ENCODE measurements at regions of chr9 and their contacts with region 1.

Region 1: DNA sequence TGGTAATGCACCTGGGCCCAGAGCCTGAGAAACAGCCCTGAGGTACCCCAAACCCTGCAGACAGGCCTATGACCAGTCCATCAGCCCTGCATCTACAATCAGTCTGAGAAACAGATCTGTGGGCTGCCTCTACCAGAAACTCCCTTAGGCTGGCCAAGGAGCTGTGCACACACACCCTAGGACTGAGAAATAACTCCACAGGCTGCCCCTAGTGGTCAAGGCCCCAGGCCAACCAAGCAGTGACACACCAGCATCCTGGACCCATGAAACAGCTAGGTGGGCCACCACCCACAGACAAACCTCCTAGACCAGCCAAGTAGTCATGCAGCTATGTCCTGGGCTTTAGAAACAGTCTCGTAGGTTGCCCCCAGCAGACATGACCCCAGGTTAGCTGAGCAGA is 253.6 kb upstream of the VLDLR start:
- DNase-seq: no peak
- H3K4me3 ChIP-seq: no peak overlapping the region
- H3K27ac ChIP-seq: no peak overlapping the region
- H3K4me1 ChIP-seq: no peaks in the 10 kb centered on the region
- H3K27me3 ChIP-seq: no peaks in the 10 kb centered on the region
- CTCF ChIP-seq: no peak
- EP300 ChIP-seq: no peak
- POLR2A ChIP-seq: no peak

Region 2: DNA sequence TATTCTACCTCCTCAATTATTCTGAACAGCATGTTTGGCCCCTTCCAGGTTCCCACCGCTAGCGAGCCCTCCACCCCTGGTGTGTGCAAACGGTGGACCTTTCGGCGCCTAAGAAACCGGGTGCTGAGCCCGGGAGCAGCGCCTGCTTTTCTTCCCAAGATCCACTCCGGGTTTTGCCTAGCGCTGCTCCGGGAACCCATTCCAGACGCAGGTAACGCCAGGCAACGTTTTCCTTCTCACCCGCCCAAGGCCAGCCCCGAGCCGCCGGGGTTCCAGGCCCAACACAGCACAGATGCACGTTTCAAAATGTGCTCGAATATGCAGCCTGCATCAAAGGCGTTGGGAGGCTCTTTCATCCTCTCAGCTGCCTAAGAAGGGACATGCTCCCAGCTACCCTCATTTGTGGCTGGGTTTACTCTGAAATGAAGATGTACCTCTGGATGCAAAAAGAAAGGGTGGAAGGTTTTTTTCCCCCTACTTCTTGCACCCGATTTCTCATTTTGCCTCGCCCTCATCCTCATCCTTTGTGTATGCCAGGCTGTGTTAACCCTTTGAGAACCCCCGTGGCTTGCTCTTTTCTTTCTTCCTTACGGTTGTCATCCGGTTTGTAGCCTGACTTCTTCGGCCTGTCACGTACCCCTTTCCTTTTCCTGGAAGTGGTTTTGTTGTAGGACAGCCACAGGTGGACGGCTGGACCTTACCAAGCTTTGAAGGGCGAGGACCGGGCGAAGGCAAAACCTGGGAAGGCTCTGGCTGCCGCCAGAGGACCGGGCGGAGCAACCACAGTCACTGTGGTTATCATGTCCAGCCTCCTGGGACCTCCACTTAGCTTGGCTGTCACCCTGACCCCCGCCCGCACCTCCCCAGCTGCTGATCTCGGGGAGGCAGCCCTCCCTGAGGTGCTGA is 125.9 kb before region 1 on chr9:
- intact Hi-C with region 1: no loop called
- DNase-seq: peak; percentile 82 to 92 (median 89)
- H3K4me3 ChIP-seq: peak overlapping the region; percentile 47
- H3K27ac ChIP-seq: peak overlapping the region; percentile 11 to 78
- H3K4me1 ChIP-seq: peaks cover 6% of the 10 kb centered on the region
- H3K27me3 ChIP-seq: no peaks in the 10 kb centered on the region
- CTCF ChIP-seq: peak in 1 of 3 donors; percentile 35
- EP300 ChIP-seq: no peak
- POLR2A ChIP-seq: peak; percentile 73

Region 3: GRCh38 chr9:2418619-2419018 is 50.6 kb after region 1 on chr9:
- intact Hi-C with region 1: loop called in 1 of 4 experiments (anchors 10 kb)
- DNase-seq: peak in 4 of 5 donors; percentile 36 to 49 (median 47)
- H3K4me3 ChIP-seq: no peak overlapping the region
- H3K27ac ChIP-seq: peak overlapping the region in 1 of 2 donors; percentile 77
- H3K4me1 ChIP-seq: peaks cover 8% of the 10 kb centered on the region
- H3K27me3 ChIP-seq: no peaks in the 10 kb centered on the region
- CTCF ChIP-seq: peak in 1 of 3 donors; percentile 10
- EP300 ChIP-seq: no peak
- POLR2A ChIP-seq: no peak

Measured in ovary (tissue), 10 donors.